OCI-LY7 (cell line): ENCODE measurements at regions of chr9 and their contacts with region 1.

Region 1: GRCh38 chr9:15606643-15607472 is 54.0 kb downstream of the CCDC171 start:
- DNase-seq: peak; percentile 70
- H3K4me3 ChIP-seq: no peak overlapping the region
- H3K27ac ChIP-seq: no peak overlapping the region
- H3K4me1 ChIP-seq: peaks cover 5% of the 10 kb centered on the region
- CTCF ChIP-seq: peak; percentile 95

Region 2: DNA sequence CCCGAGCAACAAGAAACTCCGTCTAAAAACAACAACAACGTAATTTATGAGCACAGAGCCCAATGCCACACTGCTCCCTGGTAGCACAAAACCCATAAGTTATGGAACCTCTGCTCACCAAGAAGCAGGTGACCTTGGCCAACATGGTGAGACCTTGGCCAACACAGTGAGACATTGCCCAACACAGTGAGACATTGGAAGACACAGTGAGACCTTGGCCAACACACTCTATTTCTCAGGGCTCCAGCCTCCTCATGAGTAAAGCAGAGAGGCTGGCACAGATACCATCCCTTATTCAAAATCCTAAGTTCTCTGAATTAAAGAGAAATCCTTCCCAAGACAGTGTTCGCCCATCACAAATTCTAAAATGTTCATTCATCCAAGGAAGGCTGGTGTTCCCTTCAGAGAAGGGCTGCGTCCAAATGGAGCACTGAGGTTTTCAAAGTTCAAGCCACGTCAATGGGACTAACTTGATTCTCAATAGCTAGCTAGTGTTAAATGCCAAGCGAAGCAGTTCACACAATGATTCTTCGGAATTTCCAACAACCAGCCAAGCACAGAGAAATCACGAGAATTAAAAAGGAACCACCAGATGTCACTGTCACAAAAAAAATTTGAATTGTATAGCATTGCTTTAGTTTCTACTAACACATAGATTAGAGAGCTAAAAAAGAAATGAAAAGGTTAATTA is 329.3 kb before region 1 on chr9:
- CTCF ChIA-PET with region 1: no interaction called
- POLR2A ChIA-PET with region 1: no interaction called
- intact Hi-C with region 1: loop called (anchors 5 kb)
- DNase-seq: peak; percentile 20
- H3K4me3 ChIP-seq: no peak overlapping the region
- H3K27ac ChIP-seq: no peak overlapping the region
- H3K4me1 ChIP-seq: no peaks in the 10 kb centered on the region
- CTCF ChIP-seq: peak; percentile 75

Region 3: GRCh38 chr9:15453956-15454355 is 152.9 kb before region 1 on chr9:
- CTCF ChIA-PET with region 1: no interaction called
- POLR2A ChIA-PET with region 1: no interaction called
- intact Hi-C with region 1: loop called (anchors 5 kb)
- DNase-seq: no peak
- H3K4me3 ChIP-seq: no peak overlapping the region
- H3K27ac ChIP-seq: no peak overlapping the region
- H3K4me1 ChIP-seq: no peaks in the 10 kb centered on the region
- CTCF ChIP-seq: no peak

Region 4: DNA sequence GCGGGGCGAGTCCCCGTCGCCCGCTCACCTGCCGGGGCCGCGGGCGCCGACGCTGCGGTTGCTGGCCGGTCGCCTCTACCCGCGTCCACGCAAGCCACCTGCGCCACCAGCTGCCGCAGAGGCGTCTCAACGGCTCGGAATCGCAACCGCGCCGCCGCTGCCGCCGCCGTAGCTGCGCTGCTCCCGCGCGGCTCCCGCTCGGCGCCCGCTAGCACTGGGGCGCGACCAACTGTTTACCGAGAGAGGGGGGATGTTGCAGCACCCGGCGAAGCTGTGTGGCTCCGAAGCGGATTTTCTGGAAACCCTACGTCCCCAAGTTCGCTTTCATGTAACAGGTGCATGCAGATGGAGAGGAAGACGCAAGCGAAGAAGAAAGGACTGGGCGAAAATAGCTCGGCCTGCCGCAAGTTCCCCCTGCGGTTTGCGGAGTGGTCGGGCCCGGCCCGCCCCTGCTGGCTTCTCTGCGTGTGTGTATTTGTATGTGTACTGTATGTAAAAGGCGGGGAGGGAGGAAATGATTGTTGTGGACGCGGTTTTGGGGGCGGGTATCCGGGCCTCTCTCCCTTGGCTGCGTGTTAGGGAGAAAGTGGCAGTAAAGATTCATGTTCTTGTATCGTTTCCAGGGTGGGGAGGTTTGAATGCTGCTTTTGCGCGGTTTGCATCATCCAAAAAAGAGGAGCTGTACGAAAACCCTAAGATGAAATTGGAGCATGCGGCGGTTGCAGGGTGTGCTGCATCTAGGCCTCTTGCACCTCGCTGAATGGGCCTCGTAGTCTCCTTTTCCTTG is 95.9 kb before region 1 on chr9 and contains the start of gene PSIP1:
- CTCF ChIA-PET with region 1: interaction called, 3 read pairs
- POLR2A ChIA-PET with region 1: interaction called, 3 read pairs
- intact Hi-C with region 1: loop called (anchors 2 kb)
- DNase-seq: peak; percentile 94
- H3K4me3 ChIP-seq: peak within 1 kb of the TSS; percentile 99
- H3K27ac ChIP-seq: peak within 1 kb of the TSS; percentile 82
- H3K4me1 ChIP-seq: peaks cover 47% of the 10 kb centered on the region
- CTCF ChIP-seq: 0 out of 2 replicates have a peak, but pooled peaks have one; percentile 19
- total RNA-seq, gene PSIP1: 132 and 146 TPM in 2 replicates